MCF 10A (cell line): ENCODE measurements at regions of chr6 and their contacts with region 1.

Region 1: GRCh38 chr6:111483736-111484632 is 966 bp upstream of the REV3L start:
- DNase-seq: peak; percentile 96
- H3K4me3 Mint-ChIP-seq: peak overlapping the region; percentile 89
- H3K27ac Mint-ChIP-seq: peak overlapping the region; percentile 95
- H3K4me1 Mint-ChIP-seq: peaks cover 21% of the 10 kb centered on the region
- H3K27me3 Mint-ChIP-seq: no peaks in the 10 kb centered on the region
- CTCF ChIP-seq: no peak

Region 2: DNA sequence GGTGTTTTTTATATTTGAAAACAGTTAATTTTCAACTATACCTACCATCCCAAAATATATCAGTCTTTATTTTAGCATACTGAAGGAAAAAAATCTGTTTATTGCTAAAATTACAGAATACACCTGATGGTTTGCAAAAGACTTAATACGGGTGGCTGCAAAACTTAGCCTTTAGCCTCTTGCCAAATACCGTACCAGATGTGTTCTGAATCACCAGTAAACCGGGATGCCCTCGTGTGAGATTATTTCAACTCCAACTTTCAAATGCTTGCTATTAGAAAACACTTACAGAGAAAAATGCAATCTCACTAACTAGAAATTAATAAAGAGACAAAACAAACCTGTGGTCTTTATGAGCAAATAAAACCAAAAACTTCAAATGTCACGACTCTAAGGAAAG is 36.9 kb before region 1 on chr6:
- CTCF ChIA-PET with region 1: no interaction called
- POLR2A ChIA-PET with region 1: no interaction called
- intact Hi-C with region 1: no loop called
- DNase-seq: peak; percentile 34
- H3K4me3 Mint-ChIP-seq: no peak overlapping the region
- H3K27ac Mint-ChIP-seq: no peak overlapping the region
- H3K4me1 Mint-ChIP-seq: peaks cover 17% of the 10 kb centered on the region
- H3K27me3 Mint-ChIP-seq: no peaks in the 10 kb centered on the region
- CTCF ChIP-seq: no peak

Region 3: DNA sequence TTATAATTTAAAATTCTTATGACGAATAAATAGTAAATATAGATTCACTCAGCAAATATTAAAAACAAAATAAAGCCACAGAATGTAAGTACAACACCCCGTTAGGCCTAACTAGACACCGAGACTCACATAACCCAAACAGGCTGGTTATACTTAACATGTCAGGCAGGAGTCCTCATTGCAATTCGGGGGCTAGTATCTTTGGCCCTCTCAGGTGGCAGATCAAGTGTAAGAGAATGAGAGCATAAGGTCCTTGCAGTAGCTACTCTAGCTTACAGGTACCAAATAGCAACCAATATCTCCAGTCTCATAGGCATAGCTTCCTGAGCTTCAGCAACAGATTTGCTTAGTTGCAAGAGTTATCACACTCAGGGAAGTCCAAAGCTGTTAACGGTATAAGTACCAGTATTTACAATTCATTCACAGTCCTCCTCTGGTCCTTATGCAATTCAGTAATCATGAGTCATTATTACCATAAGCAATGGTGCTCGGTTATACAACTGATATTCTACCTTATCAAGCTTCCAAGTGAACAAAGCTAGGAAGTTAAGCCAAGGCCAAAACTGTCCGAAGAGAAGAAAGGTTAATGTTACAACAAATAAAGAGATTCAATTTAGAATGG is 21.1 kb before region 1 on chr6:
- CTCF ChIA-PET with region 1: interaction called, 5 read pairs
- POLR2A ChIA-PET with region 1: interaction called, 17 read pairs
- intact Hi-C with region 1: no loop called
- DNase-seq: peak; percentile 66
- H3K4me3 Mint-ChIP-seq: no peak overlapping the region
- H3K27ac Mint-ChIP-seq: peak overlapping the region; percentile 22
- H3K4me1 Mint-ChIP-seq: peaks cover 19% of the 10 kb centered on the region
- H3K27me3 Mint-ChIP-seq: no peaks in the 10 kb centered on the region
- CTCF ChIP-seq: no peak

Region 4: GRCh38 chr6:111552241-111552744 is 68.3 kb after region 1 on chr6:
- CTCF ChIA-PET with region 1: interaction called, 4 read pairs
- POLR2A ChIA-PET with region 1: interaction called, 54 read pairs
- intact Hi-C with region 1: loop called (anchors 5 kb)
- DNase-seq: peak; percentile 81
- H3K4me3 Mint-ChIP-seq: peak overlapping the region; percentile 28
- H3K27ac Mint-ChIP-seq: peak overlapping the region; percentile 21
- H3K4me1 Mint-ChIP-seq: peaks cover 41% of the 10 kb centered on the region
- H3K27me3 Mint-ChIP-seq: no peaks in the 10 kb centered on the region
- CTCF ChIP-seq: no peak

Region 5: GRCh38 chr6:111591104-111591900 is 107.3 kb after region 1 on chr6:
- CTCF ChIA-PET with region 1: interaction called, 3 read pairs
- POLR2A ChIA-PET with region 1: interaction called, 88 read pairs
- intact Hi-C with region 1: no loop called
- DNase-seq: peak; percentile 99
- H3K4me3 Mint-ChIP-seq: peak overlapping the region; percentile 43
- H3K27ac Mint-ChIP-seq: peak overlapping the region; percentile 87
- H3K4me1 Mint-ChIP-seq: peaks cover 53% of the 10 kb centered on the region
- H3K27me3 Mint-ChIP-seq: no peaks in the 10 kb centered on the region
- CTCF ChIP-seq: no peak

Region 6: GRCh38 chr6:111642463-111643158 is 158.6 kb after region 1 on chr6:
- CTCF ChIA-PET with region 1: interaction called, 5 read pairs
- POLR2A ChIA-PET with region 1: interaction called, 3 read pairs
- intact Hi-C with region 1: loop called (anchors 1 kb)
- DNase-seq: peak; percentile 80
- H3K4me3 Mint-ChIP-seq: no peak overlapping the region
- H3K27ac Mint-ChIP-seq: no peak overlapping the region
- H3K4me1 Mint-ChIP-seq: peaks cover 4% of the 10 kb centered on the region
- H3K27me3 Mint-ChIP-seq: no peaks in the 10 kb centered on the region
- CTCF ChIP-seq: peak; percentile 65